A549 (cell line): ENCODE measurements at regions of chr16 and their contacts with region 1.

Region 1: GRCh38 chr16:4402439-4403132 is 13.8 kb downstream of the CORO7 start:
- DNase-seq: peak; percentile 72 to 88
- ATAC-seq: peak; percentile 90 to 93
- H3K4me3 ChIP-seq: 0 out of 3 replicates have a peak overlapping the region, but pooled peaks have one; percentile 28
- H3K27ac ChIP-seq: peak overlapping the region; percentile 64 to 89
- H3K4me1 ChIP-seq: peaks cover 4% of the 10 kb centered on the region; the same call in 1 of the 3 replicates
- CTCF ChIP-seq: peak; percentile 99
- EP300 ChIP-seq: no peak
- POLR2A ChIP-seq: no peak
- RAD21 ChIP-seq: peak; percentile 93 to 99

Region 2: DNA sequence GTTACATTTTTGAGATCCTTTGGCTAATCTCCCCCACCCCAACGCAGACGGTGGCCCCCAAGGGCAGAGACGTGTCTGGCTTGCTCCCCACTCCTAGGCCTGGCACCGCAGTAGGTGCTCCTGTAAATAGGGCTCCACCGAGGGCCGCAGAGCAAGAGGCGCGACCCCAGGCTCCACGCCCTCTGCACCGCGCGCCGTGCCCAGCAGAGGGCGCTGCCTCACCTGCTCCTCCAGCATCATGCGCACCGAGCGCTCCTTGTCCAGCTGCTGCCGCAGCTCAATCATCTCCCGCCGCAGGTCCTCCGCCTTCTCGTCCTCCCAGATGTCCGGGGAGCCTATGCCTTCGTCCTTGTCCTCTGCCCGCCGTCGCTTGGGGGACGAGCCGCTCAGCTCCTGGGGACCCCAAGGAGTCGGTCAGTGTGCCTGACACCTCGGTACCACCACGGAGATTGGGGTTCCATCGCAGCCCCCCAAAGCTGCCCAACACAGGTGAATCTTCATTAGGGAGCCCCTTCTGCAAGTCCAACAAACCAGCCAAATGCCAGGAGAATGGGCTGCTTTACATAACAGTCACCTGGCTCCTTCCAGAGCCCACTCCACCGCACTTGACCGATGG is 140.9 kb before region 1 on chr16:
- CTCF ChIA-PET with region 1: interaction called, 31 read pairs
- POLR2A ChIA-PET with region 1: no interaction called
- DNase-seq: peak; percentile 54 to 78
- ATAC-seq: peak; percentile 55 to 81; a peak in 5 of 6 replicates
- H3K4me3 ChIP-seq: no peak overlapping the region
- H3K27ac ChIP-seq: no peak overlapping the region
- H3K4me1 ChIP-seq: peaks cover 9% of the 10 kb centered on the region; the same call in 1 of the 3 replicates
- CTCF ChIP-seq: peak; percentile 69
- EP300 ChIP-seq: no peak
- POLR2A ChIP-seq: no peak
- RAD21 ChIP-seq: peak; percentile 64 to 67

Region 3: DNA sequence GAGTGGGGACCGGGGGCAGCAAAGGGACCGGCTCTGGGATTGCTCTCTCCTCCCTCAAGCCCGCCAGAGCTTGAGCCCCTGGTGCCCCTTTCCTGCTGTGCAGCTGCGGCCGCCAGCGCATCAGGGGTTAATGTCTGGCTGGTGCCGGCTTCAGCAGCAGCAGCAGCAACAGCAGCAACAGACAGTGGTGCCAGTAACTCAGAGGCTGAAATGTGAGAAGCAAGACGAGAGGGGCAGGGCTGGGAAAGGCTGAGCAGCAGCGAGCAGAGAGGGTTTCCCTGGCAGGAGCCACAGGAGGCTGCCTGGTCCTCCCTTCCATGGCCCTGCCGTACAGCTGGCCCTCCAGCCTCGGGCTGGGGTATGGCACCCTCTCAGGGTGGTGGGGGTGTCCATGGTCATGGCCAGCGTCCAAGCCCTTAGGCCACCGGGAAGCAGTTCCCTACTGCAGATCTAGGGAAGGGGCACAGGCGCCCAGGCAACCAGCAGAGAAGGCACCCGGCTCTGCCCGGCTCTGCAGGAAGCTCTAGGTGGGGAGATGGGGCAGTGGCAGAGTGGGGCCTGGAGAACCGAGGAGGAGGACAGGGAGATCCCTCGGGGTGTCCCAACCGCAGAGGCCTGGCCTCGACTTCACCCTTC is 108.6 kb before region 1 on chr16:
- CTCF ChIA-PET with region 1: interaction called, 87 read pairs
- POLR2A ChIA-PET with region 1: interaction called, 13 read pairs
- DNase-seq: peak; percentile 50 to 70
- ATAC-seq: peak; percentile 80 to 81
- H3K4me3 ChIP-seq: no peak overlapping the region
- H3K27ac ChIP-seq: peak overlapping the region; percentile 73 to 87
- H3K4me1 ChIP-seq: peaks cover 85% of the 10 kb centered on the region
- CTCF ChIP-seq: no peak
- EP300 ChIP-seq: no peak
- POLR2A ChIP-seq: no peak
- RAD21 ChIP-seq: no peak

Region 4: GRCh38 chr16:4323845-4324478 is 78.6 kb before region 1 on chr16:
- CTCF ChIA-PET with region 1: interaction called, 114 read pairs
- POLR2A ChIA-PET with region 1: no interaction called
- DNase-seq: peak; percentile 64 to 79
- ATAC-seq: peak; percentile 55 to 77
- H3K4me3 ChIP-seq: peak overlapping the region; percentile 21; the same call in 1 of the 3 replicates
- H3K27ac ChIP-seq: peak overlapping the region; percentile 78 to 96
- H3K4me1 ChIP-seq: peaks cover 90% of the 10 kb centered on the region
- CTCF ChIP-seq: no peak
- EP300 ChIP-seq: no peak
- POLR2A ChIP-seq: no peak
- RAD21 ChIP-seq: no peak

Region 5: GRCh38 chr16:4350787-4351659 is 51.6 kb before region 1 on chr16 and contains the start of gene PAM16:
- CTCF ChIA-PET with region 1: interaction called, 231 read pairs
- POLR2A ChIA-PET with region 1: no interaction called
- DNase-seq: peak; percentile 85 to 95
- ATAC-seq: peak; percentile 85 to 94
- H3K4me3 ChIP-seq: peak within 1 kb of the TSS; percentile 90
- H3K27ac ChIP-seq: peak within 1 kb of the TSS; percentile 94 to 99
- H3K4me1 ChIP-seq: peaks cover 21% of the 10 kb centered on the region
- CTCF ChIP-seq: peak; percentile 28; the same call in 2 of the 3 replicates
- EP300 ChIP-seq: no peak
- POLR2A ChIP-seq: peak; percentile 55
- RAD21 ChIP-seq: no peak
- polyA plus RNA-seq, gene PAM16: 42.5 and 55.1 TPM in 2 replicates

Region 6: DNA sequence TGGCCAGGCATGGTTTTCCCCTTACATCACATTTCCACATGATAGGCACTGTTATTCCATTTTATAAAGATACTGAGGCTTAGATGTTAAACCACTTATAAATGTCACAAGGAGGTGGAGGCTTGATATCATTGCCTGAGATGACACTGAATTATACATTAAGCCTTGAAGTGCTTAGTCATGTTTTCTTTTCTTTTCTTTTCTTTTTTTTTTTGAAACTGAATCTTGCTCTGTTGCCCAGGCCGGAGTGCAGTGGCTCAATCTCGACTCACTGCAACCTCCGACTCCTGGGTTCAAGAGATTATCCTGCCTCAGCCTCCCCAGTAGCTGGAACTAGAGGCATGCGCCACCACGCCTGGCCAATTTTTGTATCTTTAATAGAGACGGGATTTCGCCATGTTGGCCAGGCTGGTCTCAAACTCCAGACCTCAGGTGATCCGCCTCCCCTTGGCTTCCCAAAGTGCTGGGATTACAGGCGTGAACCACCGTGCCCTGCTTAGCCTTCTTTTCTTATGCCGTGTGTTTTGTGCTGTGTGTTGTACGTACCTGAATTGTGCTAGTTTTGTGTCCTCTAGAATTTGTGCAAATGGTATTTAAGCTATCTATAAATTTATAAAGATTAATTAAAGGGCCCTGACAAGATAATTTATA is 24.3 kb after region 1 on chr16:
- CTCF ChIA-PET with region 1: interaction called, 273 read pairs
- POLR2A ChIA-PET with region 1: no interaction called
- DNase-seq: no peak
- ATAC-seq: no peak
- H3K4me3 ChIP-seq: peak overlapping the region; percentile 84
- H3K27ac ChIP-seq: peak overlapping the region; percentile 95 to 96
- H3K4me1 ChIP-seq: peaks cover 18% of the 10 kb centered on the region
- CTCF ChIP-seq: no peak
- EP300 ChIP-seq: no peak
- POLR2A ChIP-seq: no peak
- RAD21 ChIP-seq: no peak